Panc1 (cell line): ENCODE measurements at regions of chr14 and their contacts with region 1.

Region 1: GRCh38 chr14:76876076-76876475 is 49.9 kb downstream of the LRRC74A start:
- DNase-seq: peak; percentile 55
- ATAC-seq: peak; percentile 92
- H3K4me3 ChIP-seq: no peak overlapping the region
- H3K27ac ChIP-seq: no peak overlapping the region
- H3K4me1 ChIP-seq: no peaks in the 10 kb centered on the region
- H3K27me3 ChIP-seq: no peaks in the 10 kb centered on the region
- CTCF ChIP-seq: peak; percentile 87

Region 2: DNA sequence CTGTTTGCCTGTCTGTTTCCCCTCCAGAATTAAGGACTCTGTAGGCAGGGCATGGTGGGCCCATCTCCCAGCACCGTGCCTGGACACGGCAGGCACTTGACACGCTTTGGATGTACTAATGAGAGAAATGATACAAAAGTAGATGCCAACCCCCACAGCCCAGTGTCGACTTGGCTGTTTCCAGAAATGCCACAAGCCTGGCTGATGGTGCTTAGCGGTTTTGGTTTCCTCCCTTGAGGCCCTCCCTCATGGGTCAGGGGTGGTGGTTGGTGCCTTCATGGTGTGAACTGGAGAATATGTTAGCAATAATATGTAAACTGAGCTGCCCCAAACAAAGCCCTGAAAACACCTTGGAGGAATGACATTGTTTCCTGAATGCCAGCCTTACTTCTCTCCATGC is 555.6 kb before region 1 on chr14:
- CTCF ChIA-PET with region 1: no interaction called
- POLR2A ChIA-PET with region 1: no interaction called
- in situ Hi-C with region 1: no loop called
- intact Hi-C with region 1: no loop called
- DNase-seq: no peak
- ATAC-seq: no peak
- H3K4me3 ChIP-seq: no peak overlapping the region
- H3K27ac ChIP-seq: no peak overlapping the region
- H3K4me1 ChIP-seq: no peaks in the 10 kb centered on the region
- H3K27me3 ChIP-seq: peaks cover 4% of the 10 kb centered on the region
- CTCF ChIP-seq: no peak

Region 3: DNA sequence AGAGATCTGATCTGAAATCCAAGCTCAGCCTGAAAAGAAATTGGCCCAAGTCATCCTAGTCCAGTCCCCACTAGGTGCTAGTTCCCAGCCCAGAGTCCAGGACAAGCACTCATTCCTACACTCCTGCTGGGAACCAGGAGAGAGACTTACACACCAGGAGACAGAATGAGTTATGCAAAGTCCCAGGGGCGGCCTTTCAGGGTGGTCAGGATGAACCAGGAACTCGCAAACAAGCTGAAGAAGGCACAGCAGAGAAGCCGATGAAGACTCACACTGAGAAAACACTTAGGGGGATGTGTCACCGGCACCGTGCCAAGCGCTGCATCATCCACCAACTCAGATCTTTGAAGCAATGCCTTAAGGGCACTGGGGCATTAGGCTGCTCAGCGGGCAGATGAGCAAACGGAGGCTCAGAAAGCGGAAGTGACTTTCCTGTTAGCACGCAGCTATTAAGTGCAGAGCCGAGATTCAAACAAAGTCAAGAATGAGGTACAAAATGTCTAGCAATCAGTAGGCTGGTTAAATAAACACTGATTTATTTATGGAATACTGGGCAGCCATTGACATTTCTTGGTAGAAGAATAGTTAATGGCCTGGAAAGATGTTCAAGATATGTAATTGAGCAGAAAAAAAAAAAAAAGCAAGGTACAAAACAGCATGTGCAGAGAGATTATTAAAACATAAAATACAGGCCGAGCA is 28.8 kb after region 1 on chr14:
- CTCF ChIA-PET with region 1: interaction called, 12 read pairs
- POLR2A ChIA-PET with region 1: interaction called, 18 read pairs
- in situ Hi-C with region 1: no loop called
- intact Hi-C with region 1: loop called (anchors 5 kb)
- DNase-seq: peak; percentile 91
- ATAC-seq: peak; percentile 91
- H3K4me3 ChIP-seq: peak overlapping the region in 1 of 2 experiments; percentile 15; a peak in 2 of 4 replicates
- H3K27ac ChIP-seq: peak overlapping the region; percentile 66
- H3K4me1 ChIP-seq: peaks cover 15% of the 10 kb centered on the region
- H3K27me3 ChIP-seq: no peaks in the 10 kb centered on the region
- CTCF ChIP-seq: no peak

Region 4: GRCh38 chr14:76910371-76910890 is 34.4 kb after region 1 on chr14:
- CTCF ChIA-PET with region 1: interaction called, 12 read pairs
- POLR2A ChIA-PET with region 1: interaction called, 18 read pairs
- in situ Hi-C with region 1: no loop called
- intact Hi-C with region 1: loop called (anchors 5 kb)
- DNase-seq: no peak
- ATAC-seq: no peak
- H3K4me3 ChIP-seq: no peak overlapping the region
- H3K27ac ChIP-seq: peak overlapping the region; percentile 63
- H3K4me1 ChIP-seq: peaks cover 25% of the 10 kb centered on the region
- H3K27me3 ChIP-seq: no peaks in the 10 kb centered on the region
- CTCF ChIP-seq: no peak

Region 5: DNA sequence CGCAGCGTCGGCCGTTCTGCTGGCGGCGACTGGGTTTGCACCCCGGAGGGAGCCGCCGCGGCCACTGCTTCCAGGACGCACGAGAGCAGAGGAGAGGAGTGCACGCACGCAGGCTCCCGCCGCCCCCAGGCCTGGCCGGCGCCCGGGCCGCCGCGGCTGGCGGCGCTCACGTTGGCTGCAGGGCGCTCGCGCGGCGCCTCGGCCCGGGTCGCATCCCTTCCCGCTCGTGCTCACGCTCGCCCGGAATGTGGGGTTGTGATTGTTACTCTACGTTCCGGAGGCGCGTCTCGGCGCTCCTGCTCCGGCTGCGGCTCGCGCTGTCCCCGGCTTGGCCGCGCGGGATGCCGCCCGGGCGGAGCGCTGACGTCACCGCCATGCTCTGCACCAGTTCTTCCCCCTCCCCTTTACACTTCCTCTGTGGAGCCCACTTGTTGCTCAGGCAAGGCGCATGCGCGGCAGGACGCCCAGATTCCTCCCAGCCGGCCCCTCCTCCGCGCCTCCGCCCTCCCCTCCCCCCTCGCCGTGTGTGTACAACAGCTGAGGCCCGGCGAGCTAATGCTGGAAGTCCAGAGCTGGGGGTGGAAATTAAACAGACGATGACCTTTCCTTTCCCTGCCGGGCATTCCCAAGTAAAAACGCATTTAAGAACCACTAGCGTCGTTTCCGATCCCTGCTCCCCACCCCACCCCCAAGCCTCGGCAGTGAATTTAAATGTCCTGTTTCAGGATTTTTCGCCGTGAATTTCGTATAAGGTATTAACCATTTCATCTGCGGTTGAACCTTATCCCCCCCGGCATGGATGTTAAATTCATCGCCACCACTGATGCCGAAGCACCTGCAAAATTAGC is 152.5 kb after region 1 on chr14 and contains the start of gene IRF2BPL:
- CTCF ChIA-PET with region 1: interaction called, 15 read pairs
- POLR2A ChIA-PET with region 1: no interaction called
- in situ Hi-C with region 1: no loop called
- intact Hi-C with region 1: no loop called
- DNase-seq: no peak
- ATAC-seq: peak; percentile 71
- H3K4me3 ChIP-seq: peak within 1 kb of the TSS; percentile 58 to 78
- H3K27ac ChIP-seq: peak within 1 kb of the TSS; percentile 99
- H3K4me1 ChIP-seq: peaks cover 43% of the 10 kb centered on the region
- H3K27me3 ChIP-seq: no peaks in the 10 kb centered on the region
- CTCF ChIP-seq: no peak
- total RNA-seq, gene IRF2BPL: 83.3 TPM

Region 6: GRCh38 chr14:77067632-77068514 is 191.8 kb after region 1 on chr14:
- CTCF ChIA-PET with region 1: interaction called, 24 read pairs
- POLR2A ChIA-PET with region 1: no interaction called
- in situ Hi-C with region 1: no loop called
- intact Hi-C with region 1: loop called (anchors 1 kb)
- DNase-seq: peak; percentile 22
- ATAC-seq: peak; percentile 91
- H3K4me3 ChIP-seq: no peak overlapping the region
- H3K27ac ChIP-seq: peak overlapping the region; percentile 91
- H3K4me1 ChIP-seq: peaks cover 47% of the 10 kb centered on the region
- H3K27me3 ChIP-seq: no peaks in the 10 kb centered on the region
- CTCF ChIP-seq: peak; percentile 87

Region 7: GRCh38 chr14:77097700-77098528 is 221.8 kb after region 1 on chr14 and contains the start of gene CIPC:
- CTCF ChIA-PET with region 1: interaction called, 13 read pairs
- POLR2A ChIA-PET with region 1: interaction called, 11 read pairs
- in situ Hi-C with region 1: no loop called
- intact Hi-C with region 1: loop called (anchors 1 kb)
- DNase-seq: peak; percentile 78
- ATAC-seq: peak; percentile 94
- H3K4me3 ChIP-seq: peak within 1 kb of the TSS; percentile 87 to 97
- H3K27ac ChIP-seq: peak within 1 kb of the TSS; percentile 98
- H3K4me1 ChIP-seq: peaks cover 17% of the 10 kb centered on the region
- H3K27me3 ChIP-seq: no peaks in the 10 kb centered on the region
- CTCF ChIP-seq: no peak
- total RNA-seq, gene CIPC: 20.3 TPM

Region 8: DNA sequence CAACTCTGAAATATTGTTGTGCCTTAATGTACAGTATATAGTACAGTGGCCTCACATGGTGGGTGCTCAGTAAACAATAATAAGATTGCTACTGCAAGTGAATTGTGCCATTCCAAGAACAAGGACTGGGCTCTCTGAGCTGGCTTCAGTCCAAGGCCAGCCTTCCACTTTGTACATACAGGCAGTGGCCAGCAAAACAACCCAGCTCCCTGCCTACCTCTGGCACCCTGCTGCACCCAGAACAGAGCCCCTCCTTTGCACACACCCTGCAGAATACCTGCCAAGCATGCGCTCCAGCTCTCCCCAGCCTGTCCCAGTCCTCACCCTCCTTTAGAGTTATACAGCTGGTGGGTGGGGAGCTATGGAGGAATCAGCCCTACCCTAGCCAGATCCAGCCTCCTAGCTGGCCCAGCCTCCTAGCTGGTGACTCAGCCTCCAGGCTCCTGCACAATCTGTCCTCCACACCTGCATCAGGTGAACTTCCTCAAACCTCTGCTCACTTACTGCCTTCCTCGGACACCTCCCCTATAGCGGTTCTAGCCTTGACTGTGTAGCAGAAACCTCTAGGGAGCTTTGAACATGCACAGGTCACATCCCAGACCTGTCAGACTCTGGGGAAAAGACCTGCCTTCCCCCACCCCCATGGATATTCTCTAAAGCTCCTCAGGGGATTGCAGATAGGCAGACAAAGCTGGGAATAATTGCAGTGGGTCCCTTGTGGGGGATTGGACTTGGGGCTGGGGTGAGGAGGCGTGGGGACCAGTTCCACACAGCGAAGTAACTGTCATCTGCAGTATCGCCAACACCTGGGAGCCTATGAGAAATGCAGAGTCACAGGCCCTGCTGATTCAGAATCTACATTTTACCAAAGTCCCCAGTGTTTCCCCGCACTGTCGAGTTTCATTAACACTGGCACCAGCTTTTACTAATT is 247.6 kb after region 1 on chr14:
- CTCF ChIA-PET with region 1: no interaction called
- POLR2A ChIA-PET with region 1: interaction called, 10 read pairs
- in situ Hi-C with region 1: no loop called
- intact Hi-C with region 1: no loop called
- DNase-seq: no peak
- ATAC-seq: peak; percentile 50; the same call in 1 of the 2 replicates
- H3K4me3 ChIP-seq: no peak overlapping the region
- H3K27ac ChIP-seq: no peak overlapping the region
- H3K4me1 ChIP-seq: no peaks in the 10 kb centered on the region
- H3K27me3 ChIP-seq: no peaks in the 10 kb centered on the region; the same call in 1 of the 2 replicates
- CTCF ChIP-seq: no peak